ENCODE measurements at regions of chr15 and their contacts with region 1.

Region 1: DNA sequence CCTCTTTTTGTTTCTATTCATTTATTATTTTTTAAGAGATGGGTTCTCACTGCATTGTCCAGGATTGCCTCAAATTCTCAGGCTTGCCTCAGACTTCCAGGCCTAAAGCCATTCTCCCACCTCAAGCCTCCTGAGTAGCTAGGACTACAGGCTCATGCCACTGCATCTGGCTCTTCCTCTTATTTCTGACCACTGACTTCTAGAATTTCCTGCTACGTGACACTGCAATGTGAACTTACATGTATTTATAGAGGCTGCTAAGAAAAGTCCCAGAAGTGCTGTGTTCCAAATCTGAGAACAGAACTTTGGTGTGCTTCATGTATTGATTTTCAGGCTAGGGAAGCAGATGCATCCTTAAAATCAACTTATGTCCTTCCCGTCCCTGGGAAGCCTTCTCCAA is 407.4 kb downstream of the RSL24D1 start:
- DNase-seq: no peak

Region 2: DNA sequence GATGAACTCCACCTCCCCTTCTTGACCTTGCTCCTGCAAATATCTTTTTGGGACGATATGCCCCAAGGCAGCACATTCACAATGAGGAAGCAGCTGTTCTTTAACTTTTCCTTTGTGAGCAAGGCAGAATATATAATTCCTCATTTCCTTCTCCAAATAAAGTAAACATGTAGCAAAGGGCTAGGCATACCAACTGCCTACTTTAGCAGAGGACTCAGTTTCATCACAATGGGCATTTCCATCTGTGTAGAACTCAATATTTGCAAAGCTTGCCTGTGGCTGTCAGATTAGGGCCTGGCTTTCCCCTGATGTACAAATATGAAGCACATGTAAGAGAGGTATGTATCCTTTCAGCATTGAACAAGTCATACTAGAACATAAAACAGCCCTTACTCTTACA is 40.4 kb after region 1 on chr15:
- intact Hi-C with region 1: loop called in 1 of 2 experiments (anchors 2 kb)
- DNase-seq: no peak

Measured in posterior vena cava (tissue), 2 donors.